ENCODE measurements at regions of chr4 and their contacts with region 1.

Region 1: DNA sequence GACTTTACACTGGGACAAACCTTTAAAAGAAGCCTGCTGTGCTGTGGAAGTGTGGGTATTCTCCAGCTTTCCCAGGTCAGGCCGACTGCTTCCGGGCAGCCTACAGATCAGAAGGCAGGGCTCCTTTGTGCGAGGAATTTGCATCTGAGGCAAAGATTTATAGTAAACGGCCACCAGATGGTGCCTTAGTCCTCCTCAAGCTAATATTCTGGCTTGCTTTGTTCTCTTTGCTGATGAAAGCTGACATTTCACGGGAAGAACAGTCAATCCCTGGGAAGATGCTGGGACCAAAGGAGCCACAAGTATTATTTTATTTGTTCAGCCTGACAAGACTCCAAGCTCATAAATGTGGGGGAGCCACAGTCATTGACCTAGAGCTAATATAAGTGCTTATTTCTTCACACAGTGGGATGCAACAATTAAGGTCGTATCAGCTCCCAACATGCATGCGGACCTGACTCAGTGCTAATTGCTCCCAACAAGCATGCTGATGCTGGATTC is 120.7 kb upstream of the TRIM2 start:
- DNase-seq: peak in 13 of 14 experiments; percentile 18 to 81 (median 34)
- ATAC-seq: peak; percentile 51
- H3K4me3 ChIP-seq: no peak overlapping the region
- H3K4me3 Mint-ChIP-seq: no peak overlapping the region
- H3K27ac ChIP-seq: no peak overlapping the region
- H3K27ac Mint-ChIP-seq: peak overlapping the region; percentile 2
- H3K4me1 ChIP-seq: peaks cover 56% of the 10 kb centered on the region
- H3K4me1 Mint-ChIP-seq: peaks cover 45% of the 10 kb centered on the region
- H3K27me3 ChIP-seq: no peaks in the 10 kb centered on the region
- H3K27me3 Mint-ChIP-seq: no peaks in the 10 kb centered on the region
- CTCF ChIP-seq: peak; percentile 79

Region 2: DNA sequence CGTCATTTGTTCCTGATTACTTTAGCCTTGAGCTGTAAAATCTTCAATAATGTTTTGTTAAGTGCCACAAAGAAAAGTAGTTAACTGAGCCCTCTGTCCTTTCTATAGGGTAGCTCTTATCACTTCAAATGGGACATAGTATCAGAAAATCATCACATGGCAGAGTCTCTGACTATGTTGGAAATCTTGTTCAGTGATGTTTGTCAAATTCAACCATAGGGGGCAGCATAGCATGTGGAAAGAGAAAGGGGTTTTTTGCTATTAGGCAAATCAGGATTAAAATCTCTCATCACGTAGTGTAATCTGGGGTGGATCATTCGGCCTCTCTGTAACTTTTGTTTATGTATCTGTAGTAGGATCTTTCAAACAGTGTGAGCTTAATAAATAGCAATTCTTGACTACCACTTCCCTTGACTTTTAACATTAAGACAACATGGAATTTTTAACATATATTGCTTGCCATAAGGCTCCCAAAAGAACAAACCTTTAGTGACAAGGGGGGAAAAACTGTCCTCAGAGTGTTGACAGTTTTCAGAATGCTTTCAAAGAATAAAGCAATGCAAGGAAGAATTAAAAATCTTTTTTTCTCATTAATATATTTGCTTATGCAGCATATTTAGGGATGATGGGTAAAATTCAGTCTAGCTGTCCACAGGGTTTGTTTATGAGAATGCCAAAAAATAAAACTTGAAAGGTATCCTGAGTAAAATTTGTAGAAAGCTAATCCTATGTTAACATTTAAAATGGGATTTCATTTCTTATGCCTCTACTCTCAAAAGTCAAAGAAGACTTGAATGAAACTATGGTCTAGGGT is 674.8 kb before region 1 on chr4:
- CTCF ChIA-PET with region 1: no interaction called
- POLR2A ChIA-PET with region 1: no interaction called
- intact Hi-C with region 1: loop called in 1 of 2 experiments (anchors 10 kb)
- DNase-seq: peak in 4 of 14 experiments; percentile 11 to 67 (median 62)
- ATAC-seq: peak; percentile 46
- H3K4me3 ChIP-seq: no peak overlapping the region
- H3K4me3 Mint-ChIP-seq: no peak overlapping the region
- H3K27ac ChIP-seq: no peak overlapping the region
- H3K27ac Mint-ChIP-seq: no peak overlapping the region
- H3K4me1 ChIP-seq: no peaks in the 10 kb centered on the region
- H3K4me1 Mint-ChIP-seq: peaks cover 26% of the 10 kb centered on the region
- H3K27me3 ChIP-seq: no peaks in the 10 kb centered on the region
- H3K27me3 Mint-ChIP-seq: no peaks in the 10 kb centered on the region
- CTCF ChIP-seq: peak; percentile 64

Region 3: DNA sequence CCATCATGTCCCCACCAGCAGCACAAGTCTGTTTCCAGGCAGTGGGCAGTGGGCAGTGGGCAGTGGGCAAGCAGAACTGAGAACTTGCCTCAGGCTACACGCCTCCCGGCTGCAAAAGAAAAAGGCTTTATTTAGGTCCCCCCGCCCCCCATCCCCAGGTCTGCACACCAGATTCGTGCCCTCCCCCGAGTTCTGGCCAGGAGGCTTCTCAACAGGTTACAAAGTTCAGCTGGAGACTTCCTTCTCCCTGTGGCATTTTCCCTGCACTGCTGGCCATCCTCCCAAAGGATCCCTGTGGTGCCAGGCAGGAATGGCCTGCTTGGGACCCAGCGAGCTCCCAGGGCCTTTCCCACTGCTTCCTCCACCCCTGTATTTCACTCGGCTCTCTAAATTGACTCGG is 23.7 kb after region 1 on chr4:
- CTCF ChIA-PET with region 1: interaction called, 77 read pairs
- POLR2A ChIA-PET with region 1: interaction called, 50 read pairs
- intact Hi-C with region 1: no loop called
- DNase-seq: no peak
- ATAC-seq: no peak
- H3K4me3 ChIP-seq: no peak overlapping the region
- H3K4me3 Mint-ChIP-seq: no peak overlapping the region
- H3K27ac ChIP-seq: no peak overlapping the region
- H3K27ac Mint-ChIP-seq: no peak overlapping the region
- H3K4me1 ChIP-seq: peaks cover 9% of the 10 kb centered on the region
- H3K4me1 Mint-ChIP-seq: peaks cover 5% of the 10 kb centered on the region
- H3K27me3 ChIP-seq: no peaks in the 10 kb centered on the region
- H3K27me3 Mint-ChIP-seq: no peaks in the 10 kb centered on the region
- CTCF ChIP-seq: no peak

Region 4: DNA sequence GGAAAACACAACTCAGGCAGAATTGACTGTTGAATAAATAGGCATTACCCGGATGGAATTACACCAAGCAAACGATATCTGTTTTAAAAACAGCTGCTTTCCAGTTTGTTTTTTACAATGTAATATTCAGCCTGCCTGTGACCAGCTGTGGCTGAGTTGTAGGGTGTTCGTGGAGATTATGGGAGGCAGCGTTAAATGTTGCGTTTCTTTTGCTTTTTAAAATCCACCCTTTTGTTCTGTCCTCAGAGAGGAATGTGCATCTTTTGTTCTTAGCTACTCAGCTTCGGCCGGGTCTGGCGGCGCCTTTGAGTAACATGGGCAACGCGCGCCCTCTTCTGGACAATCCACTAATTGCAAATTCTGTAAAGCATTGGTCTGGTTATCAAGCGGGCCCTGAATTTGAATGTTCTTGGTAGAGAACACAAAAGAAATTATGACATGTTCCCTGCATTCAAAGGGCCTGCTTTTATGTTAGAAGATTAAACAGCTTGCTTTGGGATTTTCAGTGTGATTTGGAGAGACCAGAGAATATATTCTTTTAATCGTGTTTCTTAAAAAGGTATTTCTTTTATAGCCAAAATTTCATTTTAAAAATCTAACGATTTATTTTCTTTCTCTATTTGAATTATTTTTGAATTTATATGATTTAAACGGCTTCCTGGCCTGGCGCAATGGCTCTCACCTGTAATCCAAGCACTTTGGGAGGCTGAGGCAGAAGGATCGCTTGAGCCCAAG is 44.4 kb after region 1 on chr4:
- CTCF ChIA-PET with region 1: interaction called, 125 read pairs
- POLR2A ChIA-PET with region 1: interaction called, 49 read pairs
- intact Hi-C with region 1: loop called (anchors 1 kb)
- DNase-seq: peak; percentile 72 to 94 (median 83)
- ATAC-seq: peak; percentile 97
- H3K4me3 ChIP-seq: no peak overlapping the region
- H3K4me3 Mint-ChIP-seq: no peak overlapping the region
- H3K27ac ChIP-seq: no peak overlapping the region
- H3K27ac Mint-ChIP-seq: peak overlapping the region; percentile 43
- H3K4me1 ChIP-seq: peaks cover 4% of the 10 kb centered on the region
- H3K4me1 Mint-ChIP-seq: peaks cover 7% of the 10 kb centered on the region
- H3K27me3 ChIP-seq: no peaks in the 10 kb centered on the region
- H3K27me3 Mint-ChIP-seq: no peaks in the 10 kb centered on the region
- CTCF ChIP-seq: peak; percentile 94

Region 5: DNA sequence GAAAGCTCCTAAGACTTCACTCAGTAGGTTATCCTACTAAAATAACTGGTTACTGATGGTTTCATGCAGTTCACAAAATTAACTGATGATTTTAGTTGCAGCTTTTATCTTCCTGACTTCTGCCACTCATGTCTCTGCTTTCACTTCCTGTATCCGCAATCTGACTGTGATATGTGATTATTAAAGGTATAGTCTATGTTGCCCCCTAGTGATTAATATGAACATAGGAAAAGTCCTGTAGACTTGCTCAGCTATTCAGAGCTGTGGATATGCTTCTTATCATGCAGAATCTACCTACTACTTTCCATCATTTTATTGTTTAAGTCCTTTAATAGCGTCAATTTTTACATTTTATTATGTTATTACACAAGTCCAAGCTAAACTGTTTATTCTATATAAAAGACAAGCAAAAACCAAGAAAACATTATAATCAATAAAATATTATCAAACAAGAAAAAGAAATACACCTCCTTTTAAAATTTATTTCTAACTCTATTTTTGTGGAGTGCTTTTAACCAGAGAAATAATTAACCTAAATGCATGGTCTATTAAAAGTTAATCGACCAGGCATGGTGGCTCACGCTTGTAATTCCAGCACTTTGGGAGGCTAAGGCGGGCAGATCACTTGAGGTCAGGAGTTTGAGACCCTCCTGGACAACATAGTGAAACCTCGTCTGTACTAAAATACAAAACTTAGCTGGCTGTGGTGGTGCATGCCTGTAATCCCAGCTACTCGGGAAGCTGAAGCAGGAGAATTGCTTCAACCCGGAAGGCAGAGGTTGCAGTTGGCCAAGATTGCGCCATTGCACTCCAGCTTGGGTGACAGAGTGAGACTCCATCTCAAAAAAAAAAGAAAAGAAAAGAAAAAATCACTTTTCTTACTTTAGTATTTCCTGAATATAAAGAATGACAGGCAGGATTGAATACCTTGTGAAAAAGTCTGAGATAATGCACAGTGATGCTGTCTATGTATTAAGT is 560.2 kb after region 1 on chr4:
- CTCF ChIA-PET with region 1: no interaction called
- POLR2A ChIA-PET with region 1: no interaction called
- intact Hi-C with region 1: loop called in 1 of 2 experiments (anchors 5 kb)
- DNase-seq: peak in 3 of 14 experiments; percentile 72 to 81 (median 77)
- ATAC-seq: peak; percentile 99
- H3K4me3 ChIP-seq: no peak overlapping the region
- H3K4me3 Mint-ChIP-seq: no peak overlapping the region
- H3K27ac ChIP-seq: peak overlapping the region in 1 of 2 donors; percentile 18
- H3K27ac Mint-ChIP-seq: no peak overlapping the region
- H3K4me1 ChIP-seq: peaks cover 7% of the 10 kb centered on the region
- H3K4me1 Mint-ChIP-seq: peaks cover 21% of the 10 kb centered on the region
- H3K27me3 ChIP-seq: no peaks in the 10 kb centered on the region
- H3K27me3 Mint-ChIP-seq: no peaks in the 10 kb centered on the region
- CTCF ChIP-seq: peak; percentile 65

Region 6: DNA sequence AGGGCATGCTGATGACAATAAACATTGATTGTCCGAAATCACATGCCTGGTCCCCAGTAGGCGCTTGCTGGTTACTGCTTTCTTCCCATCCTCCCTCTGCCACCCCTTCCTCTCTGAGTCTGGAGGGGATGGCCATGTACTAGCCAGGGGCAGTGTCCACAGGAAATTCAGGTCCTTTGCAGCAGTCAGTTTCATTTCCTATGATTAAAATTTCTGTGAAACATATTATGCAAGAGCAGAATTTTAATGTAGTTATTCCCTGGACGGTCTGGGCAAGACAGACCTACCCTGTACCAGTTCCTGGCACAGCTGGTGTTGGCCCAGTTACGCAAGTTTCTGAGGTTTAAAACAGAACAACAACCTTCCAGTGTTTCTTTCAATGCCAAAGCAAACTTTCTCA is 572.4 kb after region 1 on chr4:
- CTCF ChIA-PET with region 1: no interaction called
- POLR2A ChIA-PET with region 1: no interaction called
- intact Hi-C with region 1: no loop called
- DNase-seq: peak in 3 of 14 experiments; percentile 7 to 52 (median 45)
- ATAC-seq: no peak
- H3K4me3 ChIP-seq: no peak overlapping the region
- H3K4me3 Mint-ChIP-seq: no peak overlapping the region
- H3K27ac ChIP-seq: no peak overlapping the region
- H3K27ac Mint-ChIP-seq: no peak overlapping the region
- H3K4me1 ChIP-seq: peaks cover 20% of the 10 kb centered on the region
- H3K4me1 Mint-ChIP-seq: peaks cover 17% of the 10 kb centered on the region
- H3K27me3 ChIP-seq: no peaks in the 10 kb centered on the region
- H3K27me3 Mint-ChIP-seq: peaks cover 5% of the 10 kb centered on the region
- CTCF ChIP-seq: no peak